Sigmoid colon (tissue), 7 donors: ENCODE measurements at regions of chr1 and their contacts with region 1.

Region 1: DNA sequence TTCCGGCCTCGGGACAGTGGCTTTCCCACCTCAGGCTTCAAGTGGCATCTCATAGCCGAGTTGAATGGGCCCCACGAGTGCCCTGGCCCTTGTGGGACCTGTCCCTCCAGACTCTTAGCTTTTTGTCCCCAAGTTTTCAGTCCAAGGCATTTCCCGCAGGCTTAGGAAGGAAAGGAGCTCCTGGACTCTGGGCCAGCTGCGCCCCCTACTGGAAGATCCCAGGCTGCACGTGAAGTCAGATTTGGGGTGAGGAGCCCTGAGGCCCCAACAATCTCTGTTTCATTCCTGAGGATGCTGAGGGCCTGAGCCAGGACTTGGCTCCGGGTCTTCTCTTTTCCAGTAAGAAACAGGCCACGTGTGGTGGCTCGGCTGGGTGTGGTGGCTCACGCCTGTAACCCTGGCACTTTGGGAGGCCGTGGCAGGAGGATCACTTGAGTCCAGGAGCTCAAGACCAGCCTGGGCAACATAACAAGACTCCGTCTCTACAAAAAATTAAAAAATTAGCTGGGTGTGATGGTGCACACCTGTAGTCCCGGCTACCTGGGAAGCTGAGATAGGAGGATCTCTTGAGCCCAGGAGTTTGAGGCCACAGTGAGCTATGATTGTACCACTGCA is 67.4 kb downstream of the ARHGEF10L start:
- DNase-seq: peak; percentile 89
- H3K4me3 ChIP-seq: no peak overlapping the region
- H3K27ac ChIP-seq: peak overlapping the region; percentile 46 to 77 (median 68)
- H3K4me1 ChIP-seq: peaks cover 0 to 34% (median 20%) of the 10 kb centered on the region in 4 donors
- H3K27me3 ChIP-seq: no peaks in the 10 kb centered on the region
- CTCF ChIP-seq: peak; percentile 92 to 95 (median 93)
- EP300 ChIP-seq: no peak
- POLR2A ChIP-seq: no peak

Region 2: DNA sequence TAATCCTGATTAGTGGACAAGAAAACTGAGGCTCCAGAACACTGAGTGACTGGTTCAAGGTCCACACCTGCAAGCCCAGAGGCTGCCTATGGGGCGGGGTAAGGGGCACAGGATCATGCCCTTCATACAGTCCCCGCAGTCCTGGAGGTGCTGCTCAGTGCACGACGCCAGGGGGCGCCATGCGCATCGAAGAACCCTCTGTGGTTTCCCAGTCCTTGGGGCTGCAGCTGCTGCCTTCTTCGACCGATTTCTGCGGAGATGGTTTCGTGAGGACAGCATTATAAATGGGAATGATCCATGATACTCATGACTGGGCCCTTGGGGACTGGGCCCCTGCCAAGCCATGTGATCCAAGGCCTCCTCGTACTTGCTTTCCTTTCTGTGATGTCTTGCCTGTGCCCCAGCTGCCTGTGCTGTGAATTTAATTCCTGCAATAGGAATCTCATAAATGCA is 104.6 kb before region 1 on chr1:
- intact Hi-C with region 1: loop called (anchors 1 kb)
- DNase-seq: peak; percentile 96
- H3K4me3 ChIP-seq: no peak overlapping the region
- H3K27ac ChIP-seq: peak overlapping the region; percentile 44 to 72 (median 64)
- H3K4me1 ChIP-seq: peaks cover 0 to 13% (median 11%) of the 10 kb centered on the region in 4 donors
- H3K27me3 ChIP-seq: no peaks in the 10 kb centered on the region
- CTCF ChIP-seq: peak; percentile 88 to 96 (median 91)
- EP300 ChIP-seq: peak in 1 of 4 donors; percentile 69
- POLR2A ChIP-seq: no peak